ENCODE measurements at regions of chr17 and their contacts with region 1.

Region 1: GRCh38 chr17:1684378-1685189 is at the start of gene PRPF8:
- DNase-seq: peak; percentile 99
- ATAC-seq: peak; percentile 99
- H3K4me3 ChIP-seq: peak within 1 kb of the TSS; percentile 88 to 97 (median 92)
- H3K4me3 Mint-ChIP-seq: peak within 1 kb of the TSS; percentile 100
- H3K27ac ChIP-seq: peak within 1 kb of the TSS; percentile 90 to 92
- H3K27ac Mint-ChIP-seq: peak within 1 kb of the TSS; percentile 100
- H3K4me1 ChIP-seq: peaks cover 17 to 28% of the 10 kb centered on the region in 2 donors
- H3K4me1 Mint-ChIP-seq: peaks cover 37% of the 10 kb centered on the region
- H3K27me3 ChIP-seq: no peaks in the 10 kb centered on the region
- H3K27me3 Mint-ChIP-seq: no peaks in the 10 kb centered on the region
- CTCF ChIP-seq: no peak
- total RNA-seq, gene PRPF8: 418 and 423 TPM in 2 replicates

Region 2: DNA sequence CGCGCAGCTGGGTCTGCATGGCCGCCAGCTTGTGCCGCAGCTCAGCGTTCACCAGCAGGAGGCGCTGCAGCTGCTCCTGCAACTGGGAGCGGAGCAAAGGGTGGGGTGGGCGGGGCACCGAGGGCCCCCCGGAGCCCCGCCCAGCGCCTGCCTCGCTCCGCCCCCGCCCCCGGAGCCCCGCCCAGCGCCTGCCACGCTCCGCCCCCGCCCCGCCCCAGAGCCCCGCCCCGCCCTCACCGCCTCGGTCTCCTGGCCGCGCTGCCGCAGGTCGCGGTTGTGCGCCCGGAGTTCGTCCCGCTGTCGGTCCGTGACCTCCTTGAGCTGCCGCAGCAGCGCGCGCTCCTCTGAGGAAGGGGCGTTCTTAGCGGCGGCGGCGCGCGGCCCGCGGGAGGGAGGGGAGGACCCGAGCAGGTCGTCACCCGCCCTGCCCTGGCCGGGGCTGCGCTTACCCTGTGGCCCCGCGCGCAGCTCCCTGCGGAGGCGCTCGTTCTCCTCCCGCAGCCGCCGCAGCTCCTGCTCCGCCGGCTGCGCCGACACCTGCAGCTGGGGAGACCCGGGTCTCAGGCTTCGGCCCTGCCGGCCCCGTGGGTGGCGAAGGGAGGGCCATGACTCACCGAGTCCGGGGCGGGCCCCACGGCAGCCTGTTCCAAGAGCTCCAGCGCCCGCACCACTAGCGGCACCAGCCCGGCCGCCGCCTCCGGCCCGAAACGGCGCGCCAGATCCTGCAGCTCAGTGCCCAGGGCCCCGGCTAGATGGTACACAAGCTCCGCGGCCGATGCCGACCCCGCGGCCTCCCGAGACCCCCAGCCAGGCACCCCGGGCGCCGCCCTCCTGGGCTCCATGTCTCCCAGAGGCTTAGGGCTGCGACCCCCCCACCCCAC is 35.4 kb before region 1 on chr17:
- CTCF ChIA-PET with region 1: interaction called, 5 read pairs
- POLR2A ChIA-PET with region 1: interaction called, 7 read pairs
- intact Hi-C with region 1: loop called (anchors 2 kb)
- DNase-seq: peak; percentile 96
- ATAC-seq: peak; percentile 72
- H3K4me3 ChIP-seq: peak overlapping the region in 4 of 5 experiments; percentile 35 to 75 (median 60)
- H3K4me3 Mint-ChIP-seq: peak overlapping the region; percentile 79
- H3K27ac ChIP-seq: peak overlapping the region in 1 of 2 donors; percentile 28
- H3K27ac Mint-ChIP-seq: peak overlapping the region; percentile 75
- H3K4me1 ChIP-seq: peaks cover 26 to 36% of the 10 kb centered on the region in 2 donors
- H3K4me1 Mint-ChIP-seq: peaks cover 30% of the 10 kb centered on the region
- H3K27me3 ChIP-seq: no peaks in the 10 kb centered on the region
- H3K27me3 Mint-ChIP-seq: no peaks in the 10 kb centered on the region
- CTCF ChIP-seq: peak; percentile 79

Region 3: DNA sequence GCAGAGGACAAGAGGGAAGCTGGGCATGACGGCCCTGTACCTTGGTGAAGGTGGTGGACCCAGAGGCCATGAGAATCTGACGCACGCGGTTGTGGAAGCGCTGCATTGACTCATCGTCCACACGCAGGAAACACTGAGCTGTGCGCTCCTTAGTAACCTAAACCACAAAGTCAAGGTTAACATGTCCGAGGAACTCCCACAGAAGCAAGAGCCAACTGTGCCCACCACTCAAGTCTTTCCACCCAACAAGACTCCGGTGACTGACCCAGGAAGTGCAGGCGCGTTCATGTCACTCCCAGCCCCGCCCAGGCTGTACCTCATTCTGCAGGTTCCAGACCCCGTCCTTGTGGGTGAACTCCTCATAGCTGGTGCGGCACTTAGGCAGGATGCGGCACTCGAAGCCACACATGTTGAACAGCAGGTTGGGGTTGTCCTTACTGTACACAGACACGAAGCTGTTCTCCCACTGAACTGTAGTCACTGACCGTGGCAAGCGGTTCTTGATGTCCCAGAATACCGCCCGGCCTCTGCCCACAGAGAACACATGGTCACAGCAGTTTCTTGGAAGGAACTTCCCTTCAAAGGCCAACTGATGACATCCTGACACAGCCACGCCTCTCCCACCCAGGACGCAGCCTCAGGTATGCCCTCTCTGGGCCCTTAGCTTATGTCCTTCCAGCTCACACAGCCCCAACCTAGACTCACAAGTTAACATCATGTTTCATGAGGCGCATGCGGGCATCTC is 11.4 kb before region 1 on chr17:
- CTCF ChIA-PET with region 1: interaction called, 21 read pairs
- POLR2A ChIA-PET with region 1: no interaction called
- intact Hi-C with region 1: loop called (anchors 2 kb)
- DNase-seq: no peak
- ATAC-seq: no peak
- H3K4me3 ChIP-seq: no peak overlapping the region
- H3K4me3 Mint-ChIP-seq: no peak overlapping the region
- H3K27ac ChIP-seq: no peak overlapping the region
- H3K27ac Mint-ChIP-seq: no peak overlapping the region
- H3K4me1 ChIP-seq: no peaks in the 10 kb centered on the region
- H3K4me1 Mint-ChIP-seq: peaks cover 7% of the 10 kb centered on the region
- H3K27me3 ChIP-seq: no peaks in the 10 kb centered on the region
- H3K27me3 Mint-ChIP-seq: no peaks in the 10 kb centered on the region
- CTCF ChIP-seq: no peak

Region 4: GRCh38 chr17:1829592-1830257 is 145.1 kb after region 1 on chr17 and contains the starts of genes RPA1 and SMYD4:
- CTCF ChIA-PET with region 1: no interaction called
- POLR2A ChIA-PET with region 1: interaction called, 4 read pairs
- intact Hi-C with region 1: loop called (anchors 1 kb)
- DNase-seq: peak; percentile 91
- ATAC-seq: peak; percentile 97
- H3K4me3 ChIP-seq: peak within 1 kb of the TSS; percentile 64 to 87 (median 76)
- H3K4me3 Mint-ChIP-seq: peak within 1 kb of the TSS; percentile 94
- H3K27ac ChIP-seq: peak within 1 kb of the TSS; percentile 60 to 74
- H3K27ac Mint-ChIP-seq: peak within 1 kb of the TSS; percentile 89
- H3K4me1 ChIP-seq: peaks cover 13 to 30% of the 10 kb centered on the region in 2 donors
- H3K4me1 Mint-ChIP-seq: peaks cover 45% of the 10 kb centered on the region
- H3K27me3 ChIP-seq: no peaks in the 10 kb centered on the region
- H3K27me3 Mint-ChIP-seq: no peaks in the 10 kb centered on the region
- CTCF ChIP-seq: no peak
- total RNA-seq, gene RPA1: 74.2 and 94.5 TPM in 2 replicates
- total RNA-seq, gene SMYD4: 37.5 and 42.3 TPM in 2 replicates

Region 5: DNA sequence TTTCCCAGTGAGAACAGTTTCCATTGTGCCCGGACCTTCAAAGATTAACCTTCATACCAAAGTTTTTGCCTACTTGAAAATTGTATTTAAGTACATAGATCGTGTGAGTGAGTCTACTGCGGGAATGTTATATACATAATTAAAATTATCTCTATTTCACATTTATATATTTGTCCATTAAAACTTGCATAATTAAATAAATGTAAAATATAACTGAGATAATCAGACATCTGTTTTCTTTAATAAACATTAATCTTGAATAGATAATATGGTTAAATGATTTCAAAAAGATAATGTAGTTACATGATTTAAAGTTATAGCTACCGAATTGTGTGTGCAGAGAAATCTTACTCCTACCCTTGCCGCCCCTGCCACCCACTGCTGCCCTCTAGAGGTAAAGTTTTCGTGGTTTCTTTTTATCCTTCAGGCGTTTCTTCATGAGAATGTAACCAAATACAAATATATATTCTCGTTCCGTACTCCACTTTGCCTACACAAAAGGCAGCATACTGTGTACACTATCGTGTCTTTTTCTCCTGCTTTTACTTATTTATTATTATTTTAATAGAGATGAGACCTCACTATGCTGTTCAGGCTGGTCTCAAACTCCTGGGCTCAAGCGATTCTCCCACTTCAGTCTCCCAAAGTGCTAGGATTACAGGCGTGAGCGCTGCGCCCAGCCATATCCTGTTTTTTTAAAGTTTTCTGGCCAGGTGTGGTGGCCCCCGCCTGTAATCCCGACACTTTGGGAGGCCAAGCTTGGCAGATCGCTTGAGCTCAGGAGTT is 180.9 kb after region 1 on chr17:
- CTCF ChIA-PET with region 1: interaction called, 13 read pairs
- POLR2A ChIA-PET with region 1: no interaction called
- intact Hi-C with region 1: loop called (anchors 1 kb)
- DNase-seq: peak; percentile 73
- ATAC-seq: peak; percentile 57
- H3K4me3 ChIP-seq: no peak overlapping the region
- H3K4me3 Mint-ChIP-seq: no peak overlapping the region
- H3K27ac ChIP-seq: no peak overlapping the region
- H3K27ac Mint-ChIP-seq: no peak overlapping the region
- H3K4me1 ChIP-seq: no peaks in the 10 kb centered on the region
- H3K4me1 Mint-ChIP-seq: no peaks in the 10 kb centered on the region
- H3K27me3 ChIP-seq: no peaks in the 10 kb centered on the region
- H3K27me3 Mint-ChIP-seq: no peaks in the 10 kb centered on the region
- CTCF ChIP-seq: peak; percentile 93